ENCODE measurements at regions of chr9 and their contacts with region 1.

Region 1: GRCh38 chr9:37465249-37466036 is at the start of gene ZBTB5:
- DNase-seq: peak; percentile 100
- ATAC-seq: peak; percentile 87
- H3K4me3 ChIP-seq: peak within 1 kb of the TSS; percentile 79 to 95 (median 87)
- H3K27ac ChIP-seq: peak within 1 kb of the TSS; percentile 95
- H3K4me1 ChIP-seq: peaks cover 36% of the 10 kb centered on the region
- H3K27me3 ChIP-seq: no peaks in the 10 kb centered on the region; a peak in 1 of 5 replicates
- CTCF ChIP-seq: no peak
- EP300 ChIP-seq: peak in 1 of 2 experiments; percentile 4; a peak in 1 of 4 replicates
- POLR2A ChIP-seq: peak; percentile 76 to 84
- RAD21 ChIP-seq: no peak
- total RNA-seq, gene ZBTB5: 12.5 and 15.2 TPM in 2 replicates

Region 2: GRCh38 chr9:36423206-36423605 is 1042.2 kb before region 1 on chr9:
- CTCF ChIA-PET with region 1: no interaction called
- POLR2A ChIA-PET with region 1: no interaction called
- in situ Hi-C with region 1: no loop called
- intact Hi-C with region 1: no loop called
- DNase-seq: peak; percentile 32
- ATAC-seq: no peak
- H3K4me3 ChIP-seq: no peak overlapping the region
- H3K27ac ChIP-seq: peak overlapping the region; percentile 63
- H3K4me1 ChIP-seq: peaks cover 63% of the 10 kb centered on the region
- H3K27me3 ChIP-seq: no peaks in the 10 kb centered on the region
- CTCF ChIP-seq: no peak
- EP300 ChIP-seq: no peak
- POLR2A ChIP-seq: no peak
- RAD21 ChIP-seq: no peak

Region 3: DNA sequence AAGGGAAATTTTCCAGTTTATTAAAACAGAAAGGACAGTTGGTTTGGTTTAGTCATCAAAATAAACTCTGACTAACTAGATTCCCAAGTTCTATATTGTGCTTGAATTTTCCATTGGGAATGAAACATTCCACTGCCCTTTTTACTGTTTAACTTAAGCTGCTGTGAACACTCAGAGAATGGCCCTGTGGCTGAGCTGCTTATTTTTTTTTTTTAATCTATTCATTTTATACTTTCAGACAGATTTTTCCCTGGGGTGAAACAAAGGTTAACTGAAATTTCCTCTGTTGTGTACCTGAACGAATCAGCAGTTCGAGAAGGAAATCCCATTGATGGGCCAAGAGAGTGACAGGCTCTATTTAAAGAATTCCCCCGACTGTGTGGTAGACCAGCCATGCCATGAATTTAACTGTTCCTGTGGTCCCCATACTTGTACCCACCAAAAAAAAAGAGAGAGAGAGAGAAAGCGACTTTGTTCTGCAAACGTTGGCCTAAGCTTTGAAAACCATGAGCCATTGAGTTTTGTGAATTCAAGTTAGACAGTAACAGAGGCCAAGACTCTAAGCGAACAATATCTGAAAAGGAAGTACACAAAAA is 181.6 kb before region 1 on chr9:
- CTCF ChIA-PET with region 1: no interaction called
- POLR2A ChIA-PET with region 1: no interaction called
- in situ Hi-C with region 1: no loop called
- intact Hi-C with region 1: no loop called
- DNase-seq: peak; percentile 4
- ATAC-seq: no peak
- H3K4me3 ChIP-seq: no peak overlapping the region
- H3K27ac ChIP-seq: no peak overlapping the region
- H3K4me1 ChIP-seq: no peaks in the 10 kb centered on the region
- H3K27me3 ChIP-seq: no peaks in the 10 kb centered on the region
- CTCF ChIP-seq: no peak
- EP300 ChIP-seq: no peak
- POLR2A ChIP-seq: no peak
- RAD21 ChIP-seq: no peak

Region 4: GRCh38 chr9:37422289-37423104 is 42.9 kb before region 1 on chr9 and contains the start of gene GRHPR:
- CTCF ChIA-PET with region 1: no interaction called
- POLR2A ChIA-PET with region 1: interaction called, 34 read pairs
- in situ Hi-C with region 1: no loop called
- intact Hi-C with region 1: loop called (anchors 2 kb)
- DNase-seq: peak; percentile 78
- ATAC-seq: peak; percentile 91
- H3K4me3 ChIP-seq: peak within 1 kb of the TSS; percentile 79 to 86 (median 84)
- H3K27ac ChIP-seq: peak within 1 kb of the TSS; percentile 88
- H3K4me1 ChIP-seq: peaks cover 53% of the 10 kb centered on the region
- H3K27me3 ChIP-seq: no peaks in the 10 kb centered on the region
- CTCF ChIP-seq: peak; percentile 14; the same call in 1 of the 2 replicates
- EP300 ChIP-seq: 0 out of 4 replicates have a peak, but pooled peaks of 1 of the 2 experiments have one; percentile 15
- POLR2A ChIP-seq: peak; percentile 86 to 96
- RAD21 ChIP-seq: 0 out of 2 replicates have a peak, but pooled peaks have one; percentile 15
- total RNA-seq, gene GRHPR: 115 and 127 TPM in 2 replicates

Region 5: GRCh38 chr9:37453827-37454226 is 11.6 kb before region 1 on chr9:
- CTCF ChIA-PET with region 1: no interaction called
- POLR2A ChIA-PET with region 1: interaction called, 13 read pairs
- in situ Hi-C with region 1: no loop called
- intact Hi-C with region 1: no loop called
- DNase-seq: no peak
- ATAC-seq: peak; percentile 25; the same call in 2 of the 3 replicates
- H3K4me3 ChIP-seq: peak overlapping the region in 1 of 3 experiments; percentile 33; a peak in 2 of 6 replicates
- H3K27ac ChIP-seq: peak overlapping the region; percentile 72
- H3K4me1 ChIP-seq: peaks cover 66% of the 10 kb centered on the region
- H3K27me3 ChIP-seq: no peaks in the 10 kb centered on the region
- CTCF ChIP-seq: no peak
- EP300 ChIP-seq: no peak
- POLR2A ChIP-seq: no peak
- RAD21 ChIP-seq: no peak